CD4-positive, alpha-beta T cell (primary cell): ENCODE measurements at regions of chr18 and their contacts with region 1.

Region 1: GRCh38 chr18:12376718-12377555 is at the start of gene AFG3L2:
- DNase-seq: peak; percentile 99 to 100 (median 100)
- ATAC-seq: peak; percentile 87
- H3K4me3 ChIP-seq: peak within 1 kb of the TSS; percentile 87
- H3K4me3 Mint-ChIP-seq: peak within 1 kb of the TSS; percentile 91
- H3K27ac ChIP-seq: peak within 1 kb of the TSS; percentile 81 to 94
- H3K27ac Mint-ChIP-seq: peak within 1 kb of the TSS; percentile 85
- H3K4me1 ChIP-seq: peaks cover 40% of the 10 kb centered on the region
- H3K4me1 Mint-ChIP-seq: peaks cover 48% of the 10 kb centered on the region
- H3K27me3 ChIP-seq: no peaks in the 10 kb centered on the region
- H3K27me3 Mint-ChIP-seq: no peaks in the 10 kb centered on the region
- CTCF ChIP-seq: no peak
- total RNA-seq, gene AFG3L2: 40.4 to 46.8 TPM

Region 2: DNA sequence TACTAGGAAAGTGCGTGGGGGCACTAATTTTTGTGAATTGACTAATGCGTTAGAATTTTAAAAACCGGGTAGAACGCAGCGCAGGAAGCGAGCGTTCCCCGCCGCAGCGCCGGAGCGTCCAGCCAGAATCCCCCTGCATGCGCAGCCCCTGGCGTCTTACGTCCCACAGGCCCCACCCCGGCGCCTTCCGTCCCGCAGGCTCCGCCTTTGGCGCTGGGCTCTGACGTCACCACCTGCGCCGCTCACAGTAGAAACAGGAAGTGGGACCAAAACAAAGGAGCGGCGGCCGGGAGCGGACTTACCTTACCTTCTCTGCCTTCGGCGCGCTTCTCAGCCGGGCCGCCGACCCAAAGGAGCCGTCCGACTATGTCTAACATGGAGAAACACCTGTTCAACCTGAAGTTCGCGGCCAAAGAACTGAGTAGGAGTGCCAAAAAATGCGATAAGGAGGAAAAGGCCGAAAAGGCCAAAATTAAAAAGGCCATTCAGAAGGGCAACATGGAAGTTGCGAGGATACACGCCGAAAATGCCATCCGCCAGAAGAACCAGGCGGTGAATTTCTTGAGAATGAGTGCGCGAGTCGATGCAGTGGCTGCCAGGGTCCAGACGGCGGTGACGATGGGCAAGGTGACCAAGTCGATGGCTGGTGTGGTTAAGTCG is 525.7 kb before region 1 on chr18 and contains the start of gene CHMP1B:
- CTCF ChIA-PET with region 1: no interaction called
- POLR2A ChIA-PET with region 1: interaction called, 4 read pairs
- intact Hi-C with region 1: loop called in 1 of 2 experiments (anchors 5 kb)
- DNase-seq: peak; percentile 95 to 99 (median 97)
- ATAC-seq: peak; percentile 74
- H3K4me3 ChIP-seq: peak within 1 kb of the TSS; percentile 64
- H3K4me3 Mint-ChIP-seq: peak within 1 kb of the TSS; percentile 100
- H3K27ac ChIP-seq: peak within 1 kb of the TSS; percentile 85 to 92
- H3K27ac Mint-ChIP-seq: peak within 1 kb of the TSS; percentile 97
- H3K4me1 ChIP-seq: peaks cover 27% of the 10 kb centered on the region
- H3K4me1 Mint-ChIP-seq: peaks cover 53% of the 10 kb centered on the region
- H3K27me3 ChIP-seq: no peaks in the 10 kb centered on the region
- H3K27me3 Mint-ChIP-seq: no peaks in the 10 kb centered on the region
- CTCF ChIP-seq: no peak
- total RNA-seq, gene CHMP1B: 64.4 to 67.4 TPM

Region 3: GRCh38 chr18:11980555-11981382 is 396.2 kb before region 1 on chr18:
- CTCF ChIA-PET with region 1: no interaction called
- POLR2A ChIA-PET with region 1: interaction called, 5 read pairs
- intact Hi-C with region 1: loop called in 1 of 2 experiments (anchors 2 kb)
- DNase-seq: peak; percentile 89 to 98 (median 94)
- ATAC-seq: peak; percentile 94
- H3K4me3 ChIP-seq: peak overlapping the region; percentile 64
- H3K4me3 Mint-ChIP-seq: peak overlapping the region; percentile 93
- H3K27ac ChIP-seq: no peak overlapping the region
- H3K27ac Mint-ChIP-seq: peak overlapping the region; percentile 49
- H3K4me1 ChIP-seq: peaks cover 19% of the 10 kb centered on the region
- H3K4me1 Mint-ChIP-seq: peaks cover 12% of the 10 kb centered on the region
- H3K27me3 ChIP-seq: no peaks in the 10 kb centered on the region
- H3K27me3 Mint-ChIP-seq: no peaks in the 10 kb centered on the region
- CTCF ChIP-seq: no peak

Region 4: DNA sequence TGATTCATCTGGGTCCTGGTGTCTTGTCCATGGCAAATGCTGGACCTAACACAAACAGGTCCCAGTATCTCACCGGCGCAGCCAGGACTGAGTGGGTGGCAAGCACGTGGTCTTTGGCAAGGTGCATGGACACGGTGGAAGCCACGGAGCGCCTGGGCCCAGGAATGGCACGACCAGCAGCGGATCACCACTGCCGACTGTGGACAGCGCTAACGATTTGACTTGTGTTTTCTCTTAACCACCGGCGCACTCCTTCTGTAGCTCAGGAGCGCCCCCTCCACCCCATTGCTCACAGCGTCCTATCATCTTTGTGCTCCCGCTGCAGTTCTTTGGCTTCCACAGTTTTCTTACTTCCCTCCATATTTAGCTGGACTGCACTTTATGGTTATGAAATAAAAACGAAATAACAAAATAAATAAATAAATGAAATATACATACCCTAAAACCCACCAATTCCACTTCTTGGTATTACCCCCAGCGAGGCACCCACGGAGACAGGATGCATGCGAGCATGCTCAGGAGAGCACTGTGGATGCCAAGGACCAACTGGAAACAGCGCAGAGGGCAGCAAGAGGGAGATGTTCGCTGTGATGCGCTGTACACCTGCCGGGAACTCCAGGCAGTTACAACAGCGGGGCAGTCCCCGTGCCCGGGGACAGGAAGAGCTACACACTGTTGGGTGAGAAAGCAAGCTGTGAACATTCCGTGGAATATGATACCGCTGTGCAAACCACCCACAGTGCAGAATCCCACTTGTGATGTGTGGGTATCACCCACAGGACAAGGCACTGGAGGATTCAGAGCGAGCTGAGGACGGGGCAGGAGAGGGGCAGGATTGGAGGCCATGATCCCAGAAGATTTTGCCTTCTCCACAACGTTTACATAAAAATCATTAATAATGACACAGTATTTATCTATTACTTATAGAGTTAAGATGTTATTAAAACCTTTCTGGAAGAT is 129.8 kb before region 1 on chr18:
- CTCF ChIA-PET with region 1: no interaction called
- POLR2A ChIA-PET with region 1: no interaction called
- intact Hi-C with region 1: no loop called
- DNase-seq: no peak
- ATAC-seq: no peak
- H3K4me3 ChIP-seq: no peak overlapping the region
- H3K4me3 Mint-ChIP-seq: no peak overlapping the region
- H3K27ac ChIP-seq: no peak overlapping the region
- H3K27ac Mint-ChIP-seq: no peak overlapping the region
- H3K4me1 ChIP-seq: no peaks in the 10 kb centered on the region
- H3K4me1 Mint-ChIP-seq: no peaks in the 10 kb centered on the region
- H3K27me3 ChIP-seq: peaks cover 7 to 17% of the 10 kb centered on the region in 2 experiments
- H3K27me3 Mint-ChIP-seq: peaks cover 48% of the 10 kb centered on the region
- CTCF ChIP-seq: no peak

Region 5: DNA sequence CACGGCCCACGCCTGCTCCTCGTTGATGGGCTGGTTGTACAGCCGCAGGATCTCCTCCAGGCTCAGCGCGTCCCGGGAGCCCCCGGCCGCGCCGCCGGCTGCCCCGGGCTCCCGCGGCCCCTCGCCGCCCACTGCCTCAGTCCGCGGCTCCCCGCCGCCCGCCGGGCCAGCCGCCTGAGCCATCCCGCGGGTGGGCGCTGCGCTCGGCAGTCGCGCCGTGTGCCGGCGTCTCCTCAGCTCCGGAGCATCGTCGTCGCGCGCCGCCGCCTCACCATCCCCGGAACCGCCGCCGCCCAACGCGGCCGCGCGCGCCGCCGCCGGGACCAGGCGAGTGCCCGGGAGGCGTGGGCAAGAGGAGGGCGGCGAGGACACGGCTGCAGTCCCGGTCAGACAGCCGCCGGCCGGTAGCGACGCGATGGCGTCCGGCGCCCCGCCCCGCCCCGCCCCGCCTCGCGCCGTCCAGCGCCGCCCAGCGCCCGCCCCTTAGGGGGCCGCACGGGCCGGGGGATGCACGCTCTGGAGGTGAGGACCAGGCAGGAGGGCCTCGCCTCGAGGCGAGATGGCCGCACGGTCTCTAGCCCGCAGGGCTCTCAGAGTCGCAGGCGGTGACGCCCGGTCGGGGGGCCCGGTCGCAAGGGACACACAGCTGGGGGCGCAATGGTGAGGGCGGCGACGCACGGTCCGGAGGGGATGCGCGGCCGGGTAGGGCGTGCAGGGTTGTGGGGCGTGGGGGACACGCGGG is 280.9 kb after region 1 on chr18 and contains the start of gene SPIRE1:
- CTCF ChIA-PET with region 1: interaction called, 3 read pairs
- POLR2A ChIA-PET with region 1: interaction called, 8 read pairs
- intact Hi-C with region 1: loop called in 1 of 2 experiments (anchors 5 kb)
- DNase-seq: peak in 11 of 14 experiments; percentile 6 to 75 (median 35)
- ATAC-seq: peak; percentile 61
- H3K4me3 ChIP-seq: peak within 1 kb of the TSS; percentile 45
- H3K4me3 Mint-ChIP-seq: peak within 1 kb of the TSS; percentile 93
- H3K27ac ChIP-seq: no peak within 1 kb of the TSS
- H3K27ac Mint-ChIP-seq: peak within 1 kb of the TSS; percentile 34
- H3K4me1 ChIP-seq: peaks cover 10% of the 10 kb centered on the region
- H3K4me1 Mint-ChIP-seq: peaks cover 12% of the 10 kb centered on the region
- H3K27me3 ChIP-seq: no peaks in the 10 kb centered on the region
- H3K27me3 Mint-ChIP-seq: peaks cover 18% of the 10 kb centered on the region
- CTCF ChIP-seq: no peak
- total RNA-seq, gene SPIRE1: 0.99 to 1.4 TPM

Region 6: GRCh38 chr18:12777500-12777944 is 400.6 kb after region 1 on chr18:
- CTCF ChIA-PET with region 1: no interaction called
- POLR2A ChIA-PET with region 1: interaction called, 16 read pairs
- intact Hi-C with region 1: no loop called
- DNase-seq: no peak
- ATAC-seq: no peak
- H3K4me3 ChIP-seq: peak overlapping the region; percentile 43
- H3K4me3 Mint-ChIP-seq: no peak overlapping the region
- H3K27ac ChIP-seq: no peak overlapping the region
- H3K27ac Mint-ChIP-seq: no peak overlapping the region
- H3K4me1 ChIP-seq: peaks cover 4% of the 10 kb centered on the region
- H3K4me1 Mint-ChIP-seq: peaks cover 26% of the 10 kb centered on the region
- H3K27me3 ChIP-seq: no peaks in the 10 kb centered on the region
- H3K27me3 Mint-ChIP-seq: no peaks in the 10 kb centered on the region
- CTCF ChIP-seq: no peak

Region 7: GRCh38 chr18:12947355-12948041 is 570.6 kb after region 1 on chr18 and contains the start of gene SEH1L:
- CTCF ChIA-PET with region 1: no interaction called
- POLR2A ChIA-PET with region 1: interaction called, 43 read pairs
- intact Hi-C with region 1: loop called (anchors 1 to 2 kb)
- DNase-seq: peak; percentile 96 to 100 (median 99)
- ATAC-seq: peak; percentile 80
- H3K4me3 ChIP-seq: peak within 1 kb of the TSS; percentile 69
- H3K4me3 Mint-ChIP-seq: peak within 1 kb of the TSS; percentile 92
- H3K27ac ChIP-seq: peak within 1 kb of the TSS; percentile 93 to 96
- H3K27ac Mint-ChIP-seq: peak within 1 kb of the TSS; percentile 96
- H3K4me1 ChIP-seq: peaks cover 38% of the 10 kb centered on the region
- H3K4me1 Mint-ChIP-seq: peaks cover 38% of the 10 kb centered on the region
- H3K27me3 ChIP-seq: no peaks in the 10 kb centered on the region
- H3K27me3 Mint-ChIP-seq: no peaks in the 10 kb centered on the region
- CTCF ChIP-seq: no peak
- total RNA-seq, gene SEH1L: 23.9 to 26.7 TPM

Region 8: GRCh38 chr18:13137670-13138419 is 760.9 kb after region 1 on chr18:
- CTCF ChIA-PET with region 1: no interaction called
- POLR2A ChIA-PET with region 1: interaction called, 6 read pairs
- intact Hi-C with region 1: loop called in 1 of 2 experiments (anchors 10 kb)
- DNase-seq: peak; percentile 37 to 93 (median 58)
- ATAC-seq: peak; percentile 76
- H3K4me3 ChIP-seq: peak overlapping the region; percentile 72
- H3K4me3 Mint-ChIP-seq: peak overlapping the region; percentile 98
- H3K27ac ChIP-seq: peak overlapping the region; percentile 48 to 50
- H3K27ac Mint-ChIP-seq: peak overlapping the region; percentile 92
- H3K4me1 ChIP-seq: peaks cover 27% of the 10 kb centered on the region
- H3K4me1 Mint-ChIP-seq: peaks cover 32% of the 10 kb centered on the region
- H3K27me3 ChIP-seq: no peaks in the 10 kb centered on the region
- H3K27me3 Mint-ChIP-seq: no peaks in the 10 kb centered on the region
- CTCF ChIP-seq: no peak